ENCODE measurements at regions of chr1 and their contacts with region 1.

Region 1: DNA sequence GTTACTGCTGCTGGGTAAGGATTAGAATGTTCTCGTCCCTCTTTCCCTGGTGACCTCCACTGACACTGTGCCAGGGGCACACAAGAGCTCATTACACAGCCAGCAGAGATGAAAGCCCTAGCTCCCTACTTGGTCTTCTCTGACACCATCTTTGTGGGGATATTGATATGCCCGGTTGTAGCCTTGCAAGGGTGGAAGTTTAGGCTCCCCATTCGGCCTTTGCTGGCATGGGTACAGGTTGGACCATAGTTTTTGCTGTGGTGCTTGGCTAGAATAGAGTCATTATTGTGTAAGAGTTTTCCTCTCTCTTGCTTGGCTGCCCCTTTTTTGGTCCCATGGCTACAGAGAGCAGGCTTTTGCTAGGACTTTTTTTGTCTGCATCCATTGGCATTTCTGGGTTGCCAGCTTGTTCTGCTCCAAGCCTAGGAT is 12.3 kb downstream of the RAB4A start:
- DNase-seq: no peak
- ATAC-seq: no peak
- H3K4me3 Mint-ChIP-seq: peak overlapping the region in 1 of 10 donors; percentile 14
- H3K27ac Mint-ChIP-seq: no peak overlapping the region
- H3K4me1 Mint-ChIP-seq: peaks cover 22 to 67% (median 63%) of the 10 kb centered on the region in 4 donors
- H3K27me3 Mint-ChIP-seq: no peaks in the 10 kb centered on the region

Region 2: DNA sequence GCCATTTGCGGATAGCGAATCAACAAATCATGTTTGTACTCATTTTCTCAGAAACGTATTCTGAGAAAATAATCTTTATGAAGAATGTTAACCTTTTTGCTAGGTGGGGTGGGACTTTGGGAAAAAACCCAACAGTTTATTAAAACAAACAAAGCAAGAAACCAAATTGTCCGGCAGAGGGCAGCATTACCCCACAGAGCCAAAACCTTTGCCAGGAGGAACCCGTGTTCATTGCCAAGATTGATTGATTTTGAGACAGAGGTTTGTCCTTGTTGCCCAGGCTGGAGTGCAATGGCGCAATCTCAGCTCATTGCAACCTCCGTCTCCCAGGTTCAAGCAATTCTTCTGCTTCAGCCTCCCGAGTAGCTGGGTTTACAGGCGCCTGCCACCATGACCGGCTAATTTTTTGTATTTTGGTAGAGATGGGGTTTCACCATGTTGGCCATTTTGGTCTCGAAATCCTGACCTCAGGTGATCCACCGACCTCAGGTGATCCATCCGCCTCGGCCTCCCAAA is 618.7 kb before region 1 on chr1:
- POLR2A ChIA-PET with region 1: interaction called, 10 read pairs
- DNase-seq: peak; percentile 58 to 88 (median 76)
- ATAC-seq: peak; percentile 43 to 62
- H3K4me3 Mint-ChIP-seq: no peak overlapping the region
- H3K27ac Mint-ChIP-seq: no peak overlapping the region
- H3K4me1 Mint-ChIP-seq: no peaks in the 10 kb centered on the region
- H3K27me3 Mint-ChIP-seq: peaks cover 0 to 4% (median 0%) of the 10 kb centered on the region in 5 donors

Region 3: GRCh38 chr1:229238674-229239415 is 44.4 kb before region 1 on chr1:
- POLR2A ChIA-PET with region 1: no interaction called
- DNase-seq: no peak
- ATAC-seq: no peak
- H3K4me3 Mint-ChIP-seq: no peak overlapping the region
- H3K27ac Mint-ChIP-seq: peak overlapping the region in 2 of 10 donors; percentile 33 to 44
- H3K4me1 Mint-ChIP-seq: no peaks in the 10 kb centered on the region
- H3K27me3 Mint-ChIP-seq: peaks cover 0 to 4% (median 2%) of the 10 kb centered on the region in 5 donors